Natural killer cell (primary cell): ENCODE measurements at regions of chr2 and their contacts with region 1.

Region 1: GRCh38 chr2:190679813-190680591 is 31.1 kb downstream of the NAB1 start:
- DNase-seq: peak; percentile 54 to 82
- ATAC-seq: peak; percentile 88 to 99 (median 97)
- H3K4me3 ChIP-seq: no peak overlapping the region
- H3K4me3 Mint-ChIP-seq: no peak overlapping the region
- H3K27ac ChIP-seq: no peak overlapping the region
- H3K27ac Mint-ChIP-seq: peak overlapping the region; percentile 64 to 78
- H3K4me1 ChIP-seq: peaks cover 3% of the 10 kb centered on the region
- H3K4me1 Mint-ChIP-seq: peaks cover 10 to 21% of the 10 kb centered on the region in 2 donors
- H3K27me3 ChIP-seq: no peaks in the 10 kb centered on the region
- H3K27me3 Mint-ChIP-seq: no peaks in the 10 kb centered on the region
- CTCF ChIP-seq: peak; percentile 60

Region 2: DNA sequence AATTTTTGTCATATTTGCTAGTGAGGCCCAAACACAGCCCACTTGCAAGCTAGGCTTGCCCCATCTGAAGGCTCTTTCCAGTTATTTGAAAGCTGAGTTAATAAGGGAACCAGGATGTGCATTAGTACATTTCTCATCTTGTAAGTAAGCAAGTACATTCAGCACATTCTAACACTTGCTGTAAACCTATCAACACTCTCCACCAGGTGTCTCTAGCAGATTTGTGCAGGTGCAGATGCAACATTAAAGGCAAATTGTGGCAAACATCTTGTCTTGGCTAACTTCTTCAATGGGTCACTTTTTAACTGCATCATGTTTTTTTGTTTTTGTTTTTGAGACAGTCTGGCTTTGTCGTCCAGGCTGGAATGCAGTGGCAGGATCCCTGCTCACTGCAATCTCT is 297.2 kb before region 1 on chr2:
- intact Hi-C with region 1: loop called (anchors 1 kb)
- DNase-seq: peak in 1 of 2 donors; percentile 82
- ATAC-seq: peak; percentile 64 to 80 (median 79)
- H3K4me3 ChIP-seq: no peak overlapping the region
- H3K4me3 Mint-ChIP-seq: no peak overlapping the region
- H3K27ac ChIP-seq: no peak overlapping the region
- H3K27ac Mint-ChIP-seq: no peak overlapping the region
- H3K4me1 ChIP-seq: no peaks in the 10 kb centered on the region
- H3K4me1 Mint-ChIP-seq: peaks cover 0 to 5% of the 10 kb centered on the region in 2 donors
- H3K27me3 ChIP-seq: no peaks in the 10 kb centered on the region
- H3K27me3 Mint-ChIP-seq: no peaks in the 10 kb centered on the region
- CTCF ChIP-seq: peak; percentile 51

Region 3: GRCh38 chr2:190636373-190636772 is 43.6 kb before region 1 on chr2:
- intact Hi-C with region 1: loop called (anchors 10 kb)
- DNase-seq: no peak
- ATAC-seq: no peak
- H3K4me3 ChIP-seq: no peak overlapping the region
- H3K4me3 Mint-ChIP-seq: no peak overlapping the region
- H3K27ac ChIP-seq: no peak overlapping the region
- H3K27ac Mint-ChIP-seq: no peak overlapping the region
- H3K4me1 ChIP-seq: no peaks in the 10 kb centered on the region
- H3K4me1 Mint-ChIP-seq: no peaks in the 10 kb centered on the region
- H3K27me3 ChIP-seq: no peaks in the 10 kb centered on the region
- H3K27me3 Mint-ChIP-seq: no peaks in the 10 kb centered on the region
- CTCF ChIP-seq: no peak